IMR-90 (cell line): ENCODE measurements at regions of chr5 and their contacts with region 1.

Region 1: GRCh38 chr5:73519531-73520283 is 21.5 kb downstream of the BTF3 start:
- DNase-seq: peak; percentile 84
- ATAC-seq: peak; percentile 99
- H3K4me3 ChIP-seq: no peak overlapping the region
- H3K27ac ChIP-seq: no peak overlapping the region
- H3K4me1 ChIP-seq: peaks cover 6% of the 10 kb centered on the region
- H3K27me3 ChIP-seq: no peaks in the 10 kb centered on the region
- CTCF ChIP-seq: peak; percentile 93
- POLR2A ChIP-seq: no peak
- RAD21 ChIP-seq: peak; percentile 92

Region 2: DNA sequence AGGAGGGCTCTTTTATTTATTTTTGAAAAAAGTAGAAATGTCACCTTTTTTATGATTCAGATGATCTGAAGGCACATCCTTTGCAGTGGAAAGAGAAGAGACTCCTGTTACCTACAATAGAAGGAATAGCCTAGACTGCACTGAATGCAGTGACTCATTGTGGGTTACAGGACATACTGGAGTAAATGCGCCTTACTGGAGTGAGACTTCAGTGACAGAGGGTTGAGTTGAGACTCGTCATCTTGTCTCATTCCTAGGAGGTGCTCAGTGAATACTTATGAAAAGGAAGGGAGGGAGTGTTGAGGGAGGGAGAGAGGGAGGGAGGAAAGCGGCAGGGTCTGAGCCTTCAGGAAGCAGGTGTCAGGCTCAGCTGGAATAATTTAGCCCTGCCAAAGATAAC is 20.5 kb after region 1 on chr5:
- CTCF ChIA-PET with region 1: interaction called, 5 read pairs
- POLR2A ChIA-PET with region 1: no interaction called
- dilution Hi-C with region 1: no loop called
- in situ Hi-C with region 1: no loop called
- intact Hi-C with region 1: loop called (anchors 1 kb)
- DNase-seq: peak; percentile 90
- ATAC-seq: peak; percentile 77
- H3K4me3 ChIP-seq: no peak overlapping the region
- H3K27ac ChIP-seq: no peak overlapping the region
- H3K4me1 ChIP-seq: peaks cover 14% of the 10 kb centered on the region
- H3K27me3 ChIP-seq: no peaks in the 10 kb centered on the region
- CTCF ChIP-seq: no peak
- POLR2A ChIP-seq: no peak
- RAD21 ChIP-seq: no peak

Region 3: GRCh38 chr5:73565139-73565968 is 45.6 kb after region 1 on chr5 and contains the starts of genes ANKRA2 and UTP15:
- CTCF ChIA-PET with region 1: no interaction called
- POLR2A ChIA-PET with region 1: no interaction called
- dilution Hi-C with region 1: no loop called
- in situ Hi-C with region 1: no loop called
- intact Hi-C with region 1: loop called (anchors 1 kb)
- DNase-seq: peak; percentile 98
- ATAC-seq: peak; percentile 99
- H3K4me3 ChIP-seq: peak within 1 kb of the TSS; percentile 84
- H3K27ac ChIP-seq: peak within 1 kb of the TSS; percentile 80
- H3K4me1 ChIP-seq: no peaks in the 10 kb centered on the region
- H3K27me3 ChIP-seq: no peaks in the 10 kb centered on the region
- CTCF ChIP-seq: no peak
- POLR2A ChIP-seq: peak; percentile 69; the same call in 1 of the 2 replicates
- RAD21 ChIP-seq: no peak
- total RNA-seq, gene ANKRA2: 10.8 and 11.7 TPM in 2 replicates
- total RNA-seq, gene UTP15: 28.0 and 31.1 TPM in 2 replicates

Region 4: GRCh38 chr5:73693481-73694061 is 173.9 kb after region 1 on chr5:
- CTCF ChIA-PET with region 1: no interaction called
- POLR2A ChIA-PET with region 1: no interaction called
- dilution Hi-C with region 1: no loop called
- in situ Hi-C with region 1: no loop called
- intact Hi-C with region 1: no loop called
- DNase-seq: peak; percentile 49
- ATAC-seq: peak; percentile 16; the same call in 1 of the 2 replicates
- H3K4me3 ChIP-seq: no peak overlapping the region
- H3K27ac ChIP-seq: peak overlapping the region; percentile 17; the same call in 1 of the 2 replicates
- H3K4me1 ChIP-seq: peaks cover 23% of the 10 kb centered on the region
- H3K27me3 ChIP-seq: no peaks in the 10 kb centered on the region
- CTCF ChIP-seq: peak; percentile 59
- POLR2A ChIP-seq: no peak
- RAD21 ChIP-seq: peak; percentile 53